ENCODE measurements at regions of chr2 and their contacts with region 1.

Region 1: DNA sequence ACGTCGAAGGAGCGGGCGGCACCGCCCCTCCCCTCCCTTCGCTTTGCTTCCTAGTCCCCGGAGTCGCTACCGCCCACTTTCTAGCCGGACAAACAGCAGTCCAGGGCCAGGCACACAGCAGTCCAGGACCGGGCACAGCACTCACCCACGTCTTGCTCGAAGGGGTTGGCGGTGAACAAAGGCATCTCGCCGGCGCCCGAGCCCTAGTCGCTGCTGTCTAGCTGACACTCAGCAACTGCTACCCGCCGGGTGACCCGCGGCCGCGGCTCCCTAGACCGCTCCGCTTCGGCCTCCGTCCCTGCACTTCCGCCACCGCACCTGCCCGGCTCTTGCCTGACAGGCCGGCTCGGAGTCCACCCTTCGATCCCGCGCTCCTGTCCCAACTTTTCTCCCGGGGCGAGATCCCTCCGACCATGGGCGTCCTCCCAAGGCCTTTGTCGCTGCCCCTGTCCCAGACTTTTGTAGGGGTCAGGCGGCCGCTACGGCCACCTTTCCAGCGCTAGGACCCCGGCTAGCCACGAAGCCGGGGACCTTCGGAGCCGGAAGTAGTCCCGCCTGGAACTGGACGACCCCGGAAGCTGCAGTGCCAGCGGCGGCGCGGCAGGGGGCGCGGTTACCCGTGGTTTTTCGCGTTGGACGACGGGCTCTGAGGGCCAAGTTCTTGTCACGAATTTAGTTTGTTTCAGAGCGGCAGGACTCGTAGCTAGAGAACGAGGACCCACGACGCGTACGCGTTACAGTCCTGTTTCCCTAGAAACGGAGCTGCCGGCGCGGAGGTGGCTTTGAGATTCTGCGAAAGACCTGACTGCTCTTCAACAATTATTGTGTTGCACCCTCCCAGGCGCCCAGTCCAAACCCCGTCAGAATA is at the start of gene STAM2:
- DNase-seq: peak; percentile 84 to 90
- ATAC-seq: peak; percentile 95 to 96
- H3K4me3 ChIP-seq: peak within 1 kb of the TSS; percentile 70 to 95 (median 80)
- H3K27ac ChIP-seq: peak within 1 kb of the TSS; percentile 87 to 97 (median 92)
- H3K4me1 ChIP-seq: peaks cover 25 to 29% of the 10 kb centered on the region in 2 donors
- H3K27me3 ChIP-seq: no peaks in the 10 kb centered on the region
- CTCF ChIP-seq: peak; percentile 93 to 98 (median 96)
- POLR2A ChIP-seq: peak; percentile 74 to 78
- total RNA-seq, gene STAM2: 16.7 to 31.8 (median 20.3) TPM

Region 2: GRCh38 chr2:152036611-152037469 is 138.9 kb before region 1 on chr2:
- in situ Hi-C with region 1: loop called in 2 of 4 experiments (anchors 10 to 25 kb)
- intact Hi-C with region 1: loop called (anchors 2 kb)
- DNase-seq: peak; percentile 26 to 49
- ATAC-seq: peak; percentile 82 to 83
- H3K4me3 ChIP-seq: no peak overlapping the region
- H3K27ac ChIP-seq: no peak overlapping the region
- H3K4me1 ChIP-seq: peaks cover 15 to 19% of the 10 kb centered on the region in 2 donors
- H3K27me3 ChIP-seq: no peaks in the 10 kb centered on the region
- CTCF ChIP-seq: peak; percentile 44 to 83 (median 63)
- POLR2A ChIP-seq: no peak

Region 3: DNA sequence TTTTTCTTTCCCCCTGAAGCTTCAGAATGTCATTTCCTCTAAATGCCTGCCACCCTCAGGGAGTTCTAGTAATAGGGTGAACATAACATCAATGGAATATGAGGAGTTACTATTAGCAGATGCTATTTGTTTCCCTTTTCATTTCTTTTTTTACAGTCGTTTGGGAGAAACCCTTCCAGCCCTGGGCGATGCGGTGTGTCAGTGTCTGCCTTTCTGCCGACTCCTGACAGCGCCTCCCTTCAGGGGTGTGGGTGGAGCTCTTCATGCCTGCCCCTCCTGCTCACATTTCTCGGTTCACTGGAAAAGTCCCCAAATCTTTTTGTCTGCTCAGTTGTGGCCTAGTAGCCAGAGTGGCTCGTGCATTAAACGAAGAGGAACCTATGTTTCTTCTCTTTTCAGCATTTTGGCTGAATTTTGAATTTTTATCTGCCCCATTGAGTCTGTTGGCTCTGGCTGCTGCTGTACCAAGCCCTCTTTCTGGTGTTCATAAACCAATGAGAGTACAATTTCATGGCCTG is 231.6 kb after region 1 on chr2:
- in situ Hi-C with region 1: no loop called
- intact Hi-C with region 1: loop called (anchors 5 kb)
- DNase-seq: peak; percentile 55
- ATAC-seq: peak in 1 of 2 donors; percentile 44
- H3K4me3 ChIP-seq: peak overlapping the region; percentile 14 to 40 (median 24)
- H3K27ac ChIP-seq: peak overlapping the region; percentile 71 to 86 (median 80)
- H3K4me1 ChIP-seq: peaks cover 91 to 94% of the 10 kb centered on the region in 2 donors
- H3K27me3 ChIP-seq: no peaks in the 10 kb centered on the region
- CTCF ChIP-seq: no peak
- POLR2A ChIP-seq: peak in 1 of 2 donors; percentile 52

Region 4: GRCh38 chr2:152635635-152636298 is 460.1 kb after region 1 on chr2:
- in situ Hi-C with region 1: no loop called
- intact Hi-C with region 1: loop called (anchors 2 kb)
- DNase-seq: peak in 1 of 2 donors; percentile 30
- ATAC-seq: peak in 1 of 2 donors; percentile 53
- H3K4me3 ChIP-seq: no peak overlapping the region
- H3K27ac ChIP-seq: no peak overlapping the region
- H3K4me1 ChIP-seq: no peaks in the 10 kb centered on the region
- H3K27me3 ChIP-seq: no peaks in the 10 kb centered on the region
- CTCF ChIP-seq: peak; percentile 77 to 89 (median 87)
- POLR2A ChIP-seq: no peak

Region 5: DNA sequence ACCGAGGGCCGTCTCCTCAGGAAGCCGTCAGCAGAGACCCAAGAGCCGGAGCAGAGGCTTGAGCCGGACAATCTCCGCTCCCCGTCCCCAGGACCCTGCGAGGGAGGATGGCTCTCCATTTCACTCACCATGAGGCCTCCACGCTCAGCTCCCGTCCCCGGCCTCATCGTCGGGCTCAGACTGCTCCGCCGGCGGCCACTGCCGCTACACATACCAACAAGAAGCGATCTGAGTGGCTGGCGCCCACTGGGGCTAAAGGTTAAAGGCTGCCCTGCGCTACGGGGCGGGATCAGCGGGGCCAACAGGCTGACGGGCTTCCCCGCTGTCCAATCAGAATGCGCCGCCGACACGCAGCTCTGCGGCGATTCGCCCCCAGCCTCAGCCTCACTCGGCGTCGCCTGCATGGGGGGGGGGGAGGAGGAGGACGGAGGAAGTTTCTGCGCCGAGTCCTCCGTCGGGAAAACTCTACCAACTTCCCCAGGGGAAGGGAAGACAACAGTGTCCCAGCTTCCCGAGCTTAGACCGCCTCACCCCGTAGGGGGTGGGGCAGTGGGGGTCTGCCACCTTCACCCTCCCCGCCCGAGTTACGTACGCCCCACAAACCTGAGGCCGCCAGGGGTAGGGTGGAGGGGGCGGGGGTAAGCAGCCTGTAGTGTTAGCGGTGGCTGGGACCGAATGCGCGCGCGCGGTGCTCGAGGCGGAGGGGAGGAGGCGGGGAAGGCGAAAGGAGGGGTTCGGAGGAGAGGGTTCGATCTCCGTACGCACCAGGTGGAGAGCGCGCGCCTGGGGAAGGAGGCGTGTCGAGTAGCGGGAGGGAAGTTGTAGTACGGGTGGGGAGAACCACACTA is 541.8 kb after region 1 on chr2 and contains the start of gene PRPF40A:
- in situ Hi-C with region 1: loop called in 1 of 4 experiments (anchors 10 kb)
- intact Hi-C with region 1: loop called (anchors 1 kb)
- DNase-seq: peak; percentile 99
- ATAC-seq: peak; percentile 81 to 82
- H3K4me3 ChIP-seq: peak within 1 kb of the TSS; percentile 89 to 99 (median 94)
- H3K27ac ChIP-seq: peak within 1 kb of the TSS; percentile 95 to 99 (median 98)
- H3K4me1 ChIP-seq: peaks cover 40 to 46% of the 10 kb centered on the region in 2 donors
- H3K27me3 ChIP-seq: no peaks in the 10 kb centered on the region
- CTCF ChIP-seq: peak in 1 of 5 experiments; percentile 19
- POLR2A ChIP-seq: peak; percentile 79 to 83
- total RNA-seq, gene PRPF40A: 65.3 to 78.0 (median 69.9) TPM

Region 6: GRCh38 chr2:153519257-153519875 is 1343.7 kb after region 1 on chr2:
- in situ Hi-C with region 1: no loop called
- intact Hi-C with region 1: loop called (anchors 5 kb)
- DNase-seq: no peak
- ATAC-seq: no peak
- H3K4me3 ChIP-seq: no peak overlapping the region
- H3K27ac ChIP-seq: no peak overlapping the region
- H3K4me1 ChIP-seq: no peaks in the 10 kb centered on the region
- H3K27me3 ChIP-seq: no peaks in the 10 kb centered on the region
- CTCF ChIP-seq: peak in 4 of 5 experiments; percentile 55 to 76 (median 64)
- POLR2A ChIP-seq: no peak

Measured in gastrocnemius medialis (tissue), 4 donors.